T-cell (primary cell): ENCODE measurements at regions of chr10 and their contacts with region 1.

Region 1: GRCh38 chr10:6701289-6701688 is 121.2 kb upstream of the PRKCQ start:
- DNase-seq: no peak
- ATAC-seq: no peak
- H3K4me3 ChIP-seq: no peak overlapping the region
- H3K4me3 Mint-ChIP-seq: no peak overlapping the region
- H3K27ac ChIP-seq: no peak overlapping the region
- H3K27ac Mint-ChIP-seq: no peak overlapping the region
- H3K4me1 ChIP-seq: no peaks in the 10 kb centered on the region
- H3K4me1 Mint-ChIP-seq: no peaks in the 10 kb centered on the region
- H3K27me3 ChIP-seq: peaks cover 0 to 14% of the 10 kb centered on the region in 2 experiments
- H3K27me3 Mint-ChIP-seq: peaks cover 6 to 10% of the 10 kb centered on the region in 2 donors

Region 2: GRCh38 chr10:7085913-7086589 is 384.8 kb after region 1 on chr10:
- CTCF ChIA-PET with region 1: no interaction called
- POLR2A ChIA-PET with region 1: interaction called in 1 of 2 experiments, 15 read pairs
- DNase-seq: no peak
- ATAC-seq: no peak
- H3K4me3 ChIP-seq: no peak overlapping the region
- H3K4me3 Mint-ChIP-seq: no peak overlapping the region
- H3K27ac ChIP-seq: no peak overlapping the region
- H3K27ac Mint-ChIP-seq: no peak overlapping the region
- H3K4me1 ChIP-seq: no peaks in the 10 kb centered on the region
- H3K4me1 Mint-ChIP-seq: no peaks in the 10 kb centered on the region
- H3K27me3 ChIP-seq: peaks cover 0 to 2% of the 10 kb centered on the region in 2 experiments
- H3K27me3 Mint-ChIP-seq: peaks cover 6 to 9% of the 10 kb centered on the region in 2 donors